ENCODE measurements at regions of chr4 and their contacts with region 1.

Region 1: DNA sequence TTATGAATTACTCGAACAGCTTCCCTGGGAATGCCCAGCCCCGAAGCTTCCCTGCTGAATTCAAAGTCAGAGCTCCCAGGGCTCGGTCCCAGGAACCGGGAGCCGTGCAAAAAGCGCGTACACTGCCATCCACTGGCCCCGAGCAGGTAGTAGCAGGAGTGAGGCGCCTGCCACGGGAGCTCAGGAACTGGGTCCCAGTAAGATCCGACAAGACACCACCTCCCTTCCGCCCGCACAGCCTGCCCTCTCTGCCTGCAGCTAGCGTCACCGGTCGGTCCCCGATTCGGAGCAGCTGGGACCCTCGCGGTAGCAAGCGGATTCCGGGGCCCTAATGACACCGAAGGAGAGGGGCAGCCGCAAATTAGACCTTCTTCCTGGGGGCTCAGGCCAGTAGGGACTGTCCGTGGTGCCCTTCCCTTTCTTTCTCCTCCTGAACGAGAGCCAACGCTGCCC is 1.2 kb downstream of the CORIN start:
- DNase-seq: peak; percentile 20 to 42
- ATAC-seq: peak; percentile 76 to 77
- H3K4me3 ChIP-seq: peak overlapping the region; percentile 26 to 53 (median 50)
- H3K27ac ChIP-seq: no peak overlapping the region
- H3K4me1 ChIP-seq: peaks cover 18 to 21% of the 10 kb centered on the region in 2 donors
- H3K27me3 ChIP-seq: peaks cover 7 to 19% (median 14%) of the 10 kb centered on the region in 3 donors
- CTCF ChIP-seq: peak; percentile 27 to 70 (median 54)
- POLR2A ChIP-seq: no peak

Region 2: DNA sequence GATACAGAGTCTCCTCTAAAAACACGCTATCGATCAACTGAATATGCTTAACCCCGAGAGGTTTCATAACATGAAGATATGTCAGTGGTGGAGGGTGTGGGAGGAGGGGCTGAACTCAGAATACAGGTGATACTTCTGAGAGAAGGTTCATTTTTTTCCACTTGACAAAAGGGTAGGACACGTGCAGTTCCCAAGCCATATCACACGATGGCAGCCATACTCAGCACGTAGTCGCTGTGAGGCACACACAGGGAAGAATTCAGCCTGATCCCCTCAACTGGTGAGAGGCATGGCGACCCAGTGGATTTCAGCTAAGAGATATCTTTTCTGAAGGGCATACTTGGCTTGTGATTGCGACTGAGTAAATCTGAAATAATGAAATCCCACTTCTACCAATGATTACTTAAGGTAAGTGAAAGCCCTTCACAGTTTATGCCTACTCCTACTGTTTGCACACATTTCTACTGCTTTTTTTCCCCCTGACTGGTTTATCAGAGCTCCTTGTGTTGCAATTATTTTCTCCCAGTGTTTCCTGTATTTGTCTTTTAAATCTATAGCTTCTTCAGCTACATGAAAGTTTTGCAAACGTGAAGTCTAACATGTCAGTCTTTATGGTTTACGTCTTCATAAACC is 131.9 kb before region 1 on chr4:
- in situ Hi-C with region 1: no loop called
- intact Hi-C with region 1: loop called (anchors 5 kb)
- DNase-seq: no peak
- ATAC-seq: no peak
- H3K4me3 ChIP-seq: no peak overlapping the region
- H3K27ac ChIP-seq: no peak overlapping the region
- H3K4me1 ChIP-seq: no peaks in the 10 kb centered on the region
- H3K27me3 ChIP-seq: no peaks in the 10 kb centered on the region
- CTCF ChIP-seq: no peak
- POLR2A ChIP-seq: no peak

Measured in gastrocnemius medialis (tissue), 4 donors.